GM18951 (cell line): ENCODE measurements at regions of chr12 and their contacts with region 1.

Region 1: DNA sequence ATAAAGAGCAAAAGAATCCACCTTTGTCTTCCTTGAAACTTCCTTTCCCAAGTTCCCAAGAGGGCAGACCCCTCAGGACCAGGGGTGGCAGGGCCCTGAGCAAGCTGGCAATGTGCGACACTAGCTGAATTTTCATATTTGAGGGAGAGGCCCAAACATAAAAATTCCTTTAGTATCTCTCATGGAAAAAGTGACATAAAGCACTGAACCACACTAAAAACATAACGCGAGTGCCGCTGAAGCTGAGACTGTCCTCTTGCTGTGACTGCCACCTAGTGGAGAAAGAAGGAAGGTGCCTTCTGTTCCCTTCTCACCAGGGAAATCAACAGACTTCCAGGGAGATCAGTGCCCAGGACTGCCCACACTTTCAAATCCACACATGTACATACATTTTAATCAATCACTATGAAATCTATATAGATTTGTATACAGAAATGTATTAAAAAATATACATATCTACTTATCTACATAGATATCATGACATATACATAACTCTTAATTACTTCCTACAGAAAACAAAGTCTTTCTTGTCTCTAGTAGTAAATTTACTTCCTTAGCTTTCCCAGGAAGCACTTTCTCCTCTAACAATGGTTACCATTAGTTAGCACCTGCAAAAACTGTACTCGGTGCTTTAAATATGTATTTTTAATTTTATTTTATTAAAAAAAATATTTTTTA is 53.8 kb downstream of the SSH1 start:
- POLR2A ChIP-seq: no peak

Region 2: GRCh38 chr12:108562348-108563135 is 241.0 kb before region 1 on chr12 and contains the start of gene ISCU:
- in situ Hi-C with region 1: loop called (anchors 10 kb)
- POLR2A ChIP-seq: peak; percentile 97

Region 3: GRCh38 chr12:108846290-108846701 is 42.7 kb after region 1 on chr12:
- in situ Hi-C with region 1: loop called (anchors 5 kb)
- POLR2A ChIP-seq: no peak